Dorsolateral prefrontal cortex (tissue), 120 donors: ENCODE measurements at regions of chr7 and their contacts with region 1.

Region 1: DNA sequence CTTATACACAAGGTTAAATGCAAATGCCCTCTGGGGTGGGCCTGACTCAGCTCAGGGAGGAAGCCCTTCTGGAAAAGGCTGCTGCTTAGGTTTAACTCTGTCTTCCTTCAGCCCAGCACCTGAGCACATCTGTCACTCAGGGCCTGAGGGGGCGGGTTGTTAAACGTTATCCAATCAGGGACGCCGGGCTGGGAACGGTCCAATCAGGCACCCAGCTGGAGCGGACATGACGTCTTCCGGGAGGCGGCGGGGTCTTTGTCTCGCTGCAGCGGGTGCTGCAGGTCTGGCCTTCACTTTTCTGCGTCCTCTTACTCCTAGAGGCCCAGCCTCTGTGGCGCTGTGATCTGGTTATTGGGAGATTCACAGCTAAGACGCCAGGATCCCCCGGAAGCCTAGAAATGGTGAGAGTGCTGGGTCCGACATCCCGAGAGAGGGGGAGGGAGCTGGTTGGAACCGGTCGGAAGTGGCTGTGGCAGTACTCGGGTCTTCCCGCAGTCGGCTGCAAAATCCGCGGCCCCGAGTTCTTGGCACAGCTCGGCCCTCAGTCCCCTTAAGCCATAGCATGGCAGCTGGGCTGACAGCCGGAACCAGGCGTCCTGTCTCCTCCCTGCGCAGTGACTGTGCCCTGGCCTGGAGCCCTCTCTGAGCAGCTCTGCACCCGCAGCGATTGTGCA is at the start of gene ZNF138:
- DNase-seq: peak; percentile 96 to 98 (median 98)
- H3K4me3 ChIP-seq: peak within 1 kb of the TSS; percentile 65 to 96 (median 84)
- H3K27ac ChIP-seq: peak within 1 kb of the TSS; percentile 4 to 90 (median 79)
- H3K27me3 ChIP-seq: no peaks in the 10 kb centered on the region
- CTCF ChIP-seq: peak in 10 of 56 donors; percentile 6 to 37 (median 21)
- total RNA-seq, gene ZNF138: 22.0 to 54.1 (median 33.1) TPM

Region 2: GRCh38 chr7:64562626-64563275 is 231.6 kb before region 1 on chr7 and contains the start of gene ZNF680:
- intact Hi-C with region 1: loop called in 1 of 2 experiments (anchors 10 kb)
- DNase-seq: peak; percentile 92 to 98 (median 98)
- H3K4me3 ChIP-seq: peak within 1 kb of the TSS; percentile 70 to 98 (median 87)
- H3K27ac ChIP-seq: peak within 1 kb of the TSS; percentile 51 to 94 (median 86)
- H3K27me3 ChIP-seq: no peaks in the 10 kb centered on the region
- CTCF ChIP-seq: peak in 19 of 56 donors; percentile 2 to 41 (median 23)
- total RNA-seq, gene ZNF680: 31.2 to 76.7 (median 49.4) TPM

Region 3: DNA sequence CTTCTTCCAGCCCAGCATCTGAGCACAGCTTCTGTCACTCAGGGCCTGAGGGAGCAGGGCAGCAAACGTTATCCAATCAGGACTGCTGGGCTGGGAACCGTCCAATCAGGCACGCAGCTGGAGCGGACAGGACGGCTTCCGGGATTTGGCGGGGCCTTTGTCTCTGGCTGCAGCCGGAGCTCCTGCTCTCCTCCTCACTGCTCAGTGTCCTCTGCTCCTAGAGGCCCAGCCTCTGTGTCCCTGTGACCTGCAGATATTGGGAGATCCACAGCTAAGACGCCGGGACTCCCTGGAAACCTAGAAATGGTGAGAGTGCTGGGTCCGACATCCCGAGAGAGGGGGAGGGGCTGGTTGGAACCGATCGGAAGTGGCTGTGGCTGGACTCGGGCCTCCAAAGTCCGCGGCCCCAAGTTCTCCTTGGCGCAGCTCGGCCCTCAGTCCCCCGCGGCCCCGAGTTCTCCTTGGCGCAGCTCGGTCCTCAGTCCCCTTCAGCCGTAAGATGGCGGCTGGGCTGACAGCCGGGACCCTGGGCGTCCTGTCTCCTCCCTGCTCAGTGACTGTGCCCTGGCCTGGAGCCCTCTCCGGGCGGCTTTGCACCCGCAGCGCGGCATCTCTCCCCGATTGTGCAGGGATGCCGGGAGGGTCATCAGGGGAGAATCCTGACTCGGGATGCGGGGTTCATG is 128.2 kb before region 1 on chr7 and contains the start of gene ZNF107:
- intact Hi-C with region 1: loop called in 1 of 2 experiments (anchors 10 kb)
- DNase-seq: peak; percentile 88 to 97 (median 96)
- H3K4me3 ChIP-seq: peak within 1 kb of the TSS; percentile 50 to 93 (median 82)
- H3K27ac ChIP-seq: peak within 1 kb of the TSS in 50 of 59 donors; percentile 10 to 85 (median 65)
- H3K27me3 ChIP-seq: no peaks in the 10 kb centered on the region
- CTCF ChIP-seq: peak in 3 of 56 donors; percentile 8 to 9 (median 9)
- total RNA-seq, gene ZNF107: 3.3 to 9.5 (median 6.2) TPM

Region 4: DNA sequence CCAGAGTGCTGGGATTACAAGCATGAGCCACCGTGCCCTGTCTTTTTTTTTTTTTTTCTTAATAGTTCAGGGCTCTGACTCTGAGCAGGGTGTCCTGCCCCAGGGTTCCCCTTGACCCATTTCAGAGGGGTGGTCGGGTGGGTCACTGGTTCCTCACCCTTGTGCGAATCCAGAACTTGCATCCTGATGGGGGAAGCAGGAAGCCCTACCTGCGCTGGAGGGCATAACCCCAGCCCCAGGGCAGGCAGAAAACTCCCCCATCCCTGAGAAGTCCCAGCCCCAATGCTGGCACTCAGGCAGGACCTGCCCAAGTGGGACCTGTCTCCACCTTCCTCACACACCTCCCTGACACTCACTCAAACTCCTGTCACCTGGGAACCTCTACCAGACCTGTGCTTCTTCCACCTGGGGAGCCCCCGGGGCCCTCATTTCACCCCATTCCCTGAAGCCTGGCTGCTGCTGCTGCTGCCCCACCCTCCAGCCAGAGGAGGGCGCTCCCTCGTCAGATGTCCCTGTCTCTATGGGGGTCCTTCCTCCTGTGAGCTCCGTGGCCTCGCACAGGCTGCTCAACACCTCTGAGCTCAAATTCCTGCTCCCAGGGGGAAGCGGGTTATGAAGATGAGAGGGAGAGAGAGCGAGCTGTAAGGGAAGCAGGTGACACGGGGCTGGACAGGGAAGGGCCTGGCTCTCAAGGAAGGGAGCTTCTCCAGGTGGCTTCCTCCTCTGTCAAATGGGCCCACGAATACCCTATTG is 93.6 kb after region 1 on chr7:
- intact Hi-C with region 1: loop called in 1 of 2 experiments (anchors 10 kb)
- DNase-seq: peak in 5 of 10 donors; percentile 20 to 69 (median 44)
- H3K4me3 ChIP-seq: peak overlapping the region; percentile 35 to 74 (median 58)
- H3K27ac ChIP-seq: peak overlapping the region in 26 of 59 donors; percentile 1 to 92 (median 73)
- H3K27me3 ChIP-seq: peaks cover 0 to 4% (median 0%) of the 10 kb centered on the region in 45 donors
- CTCF ChIP-seq: peak in 49 of 56 donors; percentile 22 to 64 (median 44)